ENCODE measurements at regions of chr4 and their contacts with region 1.

Region 1: GRCh38 chr4:98601708-98602107 is 56.7 kb downstream of the TSPAN5 start:
- DNase-seq: no peak
- H3K4me3 Mint-ChIP-seq: peak overlapping the region; percentile 73
- H3K27ac Mint-ChIP-seq: peak overlapping the region; percentile 90
- H3K4me1 Mint-ChIP-seq: peaks cover 60% of the 10 kb centered on the region
- H3K27me3 Mint-ChIP-seq: no peaks in the 10 kb centered on the region

Region 2: DNA sequence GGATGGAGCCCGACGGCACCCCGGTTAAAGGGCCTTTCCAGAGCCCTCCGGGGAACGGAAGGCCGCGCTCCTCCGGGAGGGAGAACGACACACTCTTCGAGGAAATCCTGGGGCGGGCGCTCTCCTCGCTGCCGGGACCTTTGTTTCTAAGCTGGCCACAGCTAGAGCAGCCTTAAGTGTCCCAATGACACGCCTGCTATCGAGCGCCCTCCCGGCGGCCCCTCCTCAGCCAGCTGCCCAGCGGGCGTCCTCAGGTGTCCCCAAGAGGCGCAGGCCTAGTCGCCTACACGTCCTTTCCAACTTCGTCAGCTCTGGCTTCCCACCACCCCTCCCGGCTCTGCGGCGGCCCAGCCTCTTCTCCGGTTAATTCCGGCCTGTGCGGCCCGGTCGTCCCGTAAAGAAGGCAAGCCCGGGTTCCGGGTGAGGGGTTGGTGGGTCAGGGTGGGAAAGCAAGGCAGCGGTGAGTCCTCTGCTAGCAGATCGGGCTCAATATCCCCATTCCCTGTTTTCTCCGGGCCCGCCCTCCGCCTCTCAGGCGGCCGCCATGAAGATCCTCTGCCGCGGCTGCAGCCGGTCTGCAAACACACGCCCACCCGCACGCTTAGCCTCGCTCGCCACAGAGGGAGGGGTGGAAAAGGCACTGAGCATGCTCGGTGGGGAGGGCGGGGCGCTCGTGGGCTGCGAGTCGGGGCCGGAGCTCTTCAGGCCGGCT is 341.0 kb before region 1 on chr4:
- intact Hi-C with region 1: loop called (anchors 2 kb)
- DNase-seq: peak; percentile 89
- H3K4me3 Mint-ChIP-seq: peak overlapping the region; percentile 96
- H3K27ac Mint-ChIP-seq: peak overlapping the region; percentile 97
- H3K4me1 Mint-ChIP-seq: peaks cover 55% of the 10 kb centered on the region
- H3K27me3 Mint-ChIP-seq: no peaks in the 10 kb centered on the region

Region 3: GRCh38 chr4:98467627-98468072 is 134.1 kb before region 1 on chr4:
- intact Hi-C with region 1: loop called (anchors 1 kb)
- DNase-seq: peak; percentile 63
- H3K4me3 Mint-ChIP-seq: peak overlapping the region; percentile 69
- H3K27ac Mint-ChIP-seq: peak overlapping the region; percentile 29
- H3K4me1 Mint-ChIP-seq: peaks cover 54% of the 10 kb centered on the region
- H3K27me3 Mint-ChIP-seq: no peaks in the 10 kb centered on the region

Region 4: DNA sequence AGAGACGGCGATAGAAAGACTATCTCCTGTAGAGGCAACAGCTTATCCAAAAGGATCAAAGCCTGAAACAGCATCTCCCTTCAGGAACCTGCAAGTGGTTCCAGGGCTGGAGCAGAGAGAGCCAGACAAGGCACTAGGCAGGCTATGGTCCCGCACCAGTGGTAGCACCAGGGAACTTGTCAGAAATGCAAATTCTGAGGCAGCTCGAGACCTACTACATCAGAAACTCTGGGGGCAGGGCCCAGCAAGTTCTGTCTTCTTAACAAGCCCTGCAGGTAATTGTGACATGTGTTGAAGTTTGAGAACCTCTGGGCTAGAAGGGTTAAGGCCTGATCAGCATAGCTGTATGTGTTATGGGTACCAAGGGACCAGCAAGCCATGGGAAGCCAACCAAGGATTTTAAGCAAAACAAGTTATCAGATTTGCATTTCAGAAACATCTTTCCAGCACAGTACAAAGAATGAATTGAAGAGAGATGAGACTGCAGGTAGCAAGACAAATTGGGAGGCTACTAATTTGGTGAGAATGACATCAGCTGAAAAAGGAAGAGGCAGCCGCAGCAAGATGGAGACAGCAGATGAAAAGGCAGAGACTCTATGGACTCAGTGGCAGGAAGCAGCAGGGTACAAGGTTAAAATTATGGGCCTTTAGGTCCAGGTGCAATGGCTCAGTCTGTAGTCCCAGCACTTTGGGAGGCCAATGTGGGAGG is 83.0 kb before region 1 on chr4:
- intact Hi-C with region 1: loop called (anchors 1 kb)
- DNase-seq: no peak
- H3K4me3 Mint-ChIP-seq: peak overlapping the region; percentile 46
- H3K27ac Mint-ChIP-seq: peak overlapping the region; percentile 79
- H3K4me1 Mint-ChIP-seq: peaks cover 80% of the 10 kb centered on the region
- H3K27me3 Mint-ChIP-seq: no peaks in the 10 kb centered on the region

Region 5: DNA sequence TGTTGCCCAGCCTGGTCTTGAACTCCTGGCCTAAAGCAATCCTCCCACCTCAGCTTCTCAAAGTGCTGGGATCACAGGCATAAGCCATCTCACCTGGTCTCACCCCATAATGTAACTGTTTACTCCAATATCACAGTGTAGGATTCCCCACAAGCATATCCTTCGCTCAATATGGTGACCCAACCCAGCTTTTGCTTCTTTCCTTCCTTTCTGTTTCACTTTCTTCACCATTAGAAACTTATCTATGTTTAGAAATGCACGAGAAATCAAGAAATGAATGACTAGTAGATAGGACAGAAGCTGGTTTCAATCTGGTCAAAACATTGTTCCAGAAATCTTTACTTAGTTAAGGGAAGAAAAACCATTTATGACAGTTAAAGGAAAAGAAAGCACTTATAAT is 37.8 kb after region 1 on chr4:
- intact Hi-C with region 1: loop called (anchors 2 kb)
- DNase-seq: no peak
- H3K4me3 Mint-ChIP-seq: peak overlapping the region; percentile 79
- H3K27ac Mint-ChIP-seq: peak overlapping the region; percentile 90
- H3K4me1 Mint-ChIP-seq: peaks cover 58% of the 10 kb centered on the region
- H3K27me3 Mint-ChIP-seq: no peaks in the 10 kb centered on the region

Region 6: GRCh38 chr4:99054428-99054994 is 452.8 kb after region 1 on chr4:
- intact Hi-C with region 1: loop called (anchors 2 kb)
- DNase-seq: no peak
- H3K4me3 Mint-ChIP-seq: no peak overlapping the region
- H3K27ac Mint-ChIP-seq: peak overlapping the region; percentile 7
- H3K4me1 Mint-ChIP-seq: peaks cover 49% of the 10 kb centered on the region
- H3K27me3 Mint-ChIP-seq: no peaks in the 10 kb centered on the region